ENCODE measurements at regions of chr21 and their contacts with region 1.

Region 1: GRCh38 chr21:45140346-45140940 is 66.1 kb downstream of the ADARB1 start:
- DNase-seq: peak; percentile 81
- ATAC-seq: peak; percentile 90
- H3K4me3 ChIP-seq: no peak overlapping the region
- H3K27ac ChIP-seq: no peak overlapping the region
- H3K4me1 ChIP-seq: no peaks in the 10 kb centered on the region
- H3K27me3 ChIP-seq: no peaks in the 10 kb centered on the region
- CTCF ChIP-seq: peak; percentile 66

Region 2: GRCh38 chr21:45336870-45337269 is 196.4 kb after region 1 on chr21:
- intact Hi-C with region 1: no loop called
- DNase-seq: peak; percentile 48
- ATAC-seq: no peak
- H3K4me3 ChIP-seq: no peak overlapping the region
- H3K27ac ChIP-seq: no peak overlapping the region
- H3K4me1 ChIP-seq: peaks cover 4% of the 10 kb centered on the region
- H3K27me3 ChIP-seq: no peaks in the 10 kb centered on the region
- CTCF ChIP-seq: no peak

Region 3: DNA sequence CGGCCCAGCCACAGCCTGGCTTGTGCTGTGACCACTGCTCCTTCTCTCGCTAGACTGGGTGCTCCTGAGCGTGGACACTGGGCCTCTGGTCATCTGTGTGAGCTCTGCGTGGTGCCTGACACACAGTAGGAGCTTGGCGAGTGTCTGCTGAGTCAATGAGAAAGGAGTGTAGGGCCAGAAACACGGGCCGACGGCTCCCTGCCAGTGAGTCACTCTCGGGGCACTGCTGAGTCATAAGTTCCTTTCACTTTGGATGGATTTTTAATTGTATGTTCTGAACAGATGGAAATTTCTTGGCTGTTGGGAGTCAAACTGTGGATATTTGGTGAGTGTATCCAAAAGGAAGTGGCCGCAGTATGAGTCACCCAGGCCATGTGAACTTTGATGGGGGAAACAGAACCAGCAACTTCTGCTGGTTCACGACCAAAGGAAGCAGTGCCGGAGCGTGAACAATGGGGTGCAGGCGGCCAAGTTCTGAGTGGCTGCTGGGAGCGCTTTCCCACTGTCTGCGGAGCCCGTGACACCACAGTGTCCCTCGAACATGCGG is 223.6 kb after region 1 on chr21:
- intact Hi-C with region 1: no loop called
- DNase-seq: no peak
- ATAC-seq: peak; percentile 58
- H3K4me3 ChIP-seq: no peak overlapping the region
- H3K27ac ChIP-seq: peak overlapping the region; percentile 89
- H3K4me1 ChIP-seq: peaks cover 20% of the 10 kb centered on the region
- H3K27me3 ChIP-seq: no peaks in the 10 kb centered on the region
- CTCF ChIP-seq: no peak

Region 4: GRCh38 chr21:45454926-45455673 is 314.7 kb after region 1 on chr21:
- intact Hi-C with region 1: loop called (anchors 10 kb)
- DNase-seq: no peak
- ATAC-seq: peak; percentile 54
- H3K4me3 ChIP-seq: peak overlapping the region; percentile 37
- H3K27ac ChIP-seq: peak overlapping the region; percentile 42
- H3K4me1 ChIP-seq: peaks cover 4% of the 10 kb centered on the region
- H3K27me3 ChIP-seq: no peaks in the 10 kb centered on the region
- CTCF ChIP-seq: no peak